Heart right ventricle (tissue), 16 donors: ENCODE measurements at regions of chr2 and their contacts with region 1.

Region 1: DNA sequence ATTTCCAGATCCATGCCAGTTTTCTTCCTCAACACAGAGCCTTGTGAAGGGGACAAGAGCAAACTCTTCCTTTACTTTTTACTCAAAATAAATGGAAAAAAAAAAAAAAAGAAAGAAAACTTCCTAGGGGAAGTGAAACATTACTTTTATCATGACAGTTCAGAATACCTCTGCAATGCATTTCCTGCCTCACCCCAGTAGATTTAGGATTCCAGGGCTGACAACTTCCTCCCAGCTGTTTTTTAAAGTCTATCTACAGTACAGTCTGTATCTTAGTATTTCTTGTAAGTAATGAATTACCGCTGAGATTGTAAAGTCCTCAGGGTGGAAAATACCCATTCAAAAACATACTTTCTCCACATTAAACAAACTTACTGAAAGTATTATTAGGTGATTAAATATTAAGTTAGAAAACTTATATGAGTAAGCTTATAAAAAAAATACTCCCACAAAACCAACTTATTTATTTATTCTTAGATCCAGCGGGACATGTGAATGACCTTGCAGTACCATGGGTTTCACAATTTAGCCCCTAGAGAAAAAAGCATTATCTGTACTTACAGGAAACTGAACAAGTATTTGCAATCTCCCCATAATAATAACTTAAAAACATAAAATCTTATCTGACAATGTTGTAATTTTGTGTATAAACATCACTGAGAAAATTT is 117.7 kb downstream of the RBMS1 start:
- DNase-seq: no peak
- ATAC-seq: peak in 7 of 8 donors; percentile 43 to 80 (median 57)
- H3K4me3 ChIP-seq: peak overlapping the region in 3 of 10 donors; percentile 5 to 16 (median 15)
- H3K27ac ChIP-seq: peak overlapping the region; percentile 55 to 88 (median 78)
- H3K4me1 ChIP-seq: peaks cover 35 to 100% (median 100%) of the 10 kb centered on the region in 9 donors
- H3K27me3 ChIP-seq: no peaks in the 10 kb centered on the region
- CTCF ChIP-seq: no peak

Region 2: DNA sequence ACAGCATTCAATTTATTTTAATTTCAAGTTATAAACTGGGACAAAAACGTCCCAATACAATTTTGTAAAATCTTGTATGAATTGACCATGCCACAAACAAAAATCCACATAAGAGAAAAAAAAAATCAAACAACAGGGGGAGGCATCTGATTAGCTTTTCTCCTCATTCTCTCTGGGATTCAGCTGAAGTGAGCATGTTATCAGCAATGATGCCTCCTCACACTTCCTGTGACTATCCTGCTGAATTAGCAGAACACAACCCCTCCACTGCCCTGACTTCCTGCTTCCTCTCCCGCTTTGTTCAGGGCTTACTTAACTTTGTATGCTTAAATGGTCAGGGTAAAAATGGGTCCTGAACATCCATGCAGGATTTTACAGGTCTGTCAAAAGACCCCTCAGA is 43.6 kb before region 1 on chr2:
- intact Hi-C with region 1: loop called in 3 of 10 experiments (anchors 5 kb)
- DNase-seq: peak in 1 of 2 donors; percentile 37
- ATAC-seq: peak in 7 of 8 donors; percentile 39 to 81 (median 45)
- H3K4me3 ChIP-seq: no peak overlapping the region
- H3K27ac ChIP-seq: peak overlapping the region in 3 of 10 donors; percentile 56 to 82 (median 67)
- H3K4me1 ChIP-seq: peaks cover 5 to 100% (median 95%) of the 10 kb centered on the region in 9 donors
- H3K27me3 ChIP-seq: no peaks in the 10 kb centered on the region
- CTCF ChIP-seq: peak in 5 of 9 donors; percentile 10 to 41 (median 25)

Region 3: GRCh38 chr2:160338901-160339685 is 36.8 kb before region 1 on chr2:
- intact Hi-C with region 1: loop called in 3 of 10 experiments (anchors 5 kb)
- DNase-seq: peak; percentile 20 to 36
- ATAC-seq: peak; percentile 58 to 79 (median 74)
- H3K4me3 ChIP-seq: no peak overlapping the region
- H3K27ac ChIP-seq: peak overlapping the region in 5 of 10 donors; percentile 2 to 39 (median 25)
- H3K4me1 ChIP-seq: peaks cover 9 to 99% (median 81%) of the 10 kb centered on the region in 9 donors
- H3K27me3 ChIP-seq: no peaks in the 10 kb centered on the region
- CTCF ChIP-seq: no peak

Region 4: DNA sequence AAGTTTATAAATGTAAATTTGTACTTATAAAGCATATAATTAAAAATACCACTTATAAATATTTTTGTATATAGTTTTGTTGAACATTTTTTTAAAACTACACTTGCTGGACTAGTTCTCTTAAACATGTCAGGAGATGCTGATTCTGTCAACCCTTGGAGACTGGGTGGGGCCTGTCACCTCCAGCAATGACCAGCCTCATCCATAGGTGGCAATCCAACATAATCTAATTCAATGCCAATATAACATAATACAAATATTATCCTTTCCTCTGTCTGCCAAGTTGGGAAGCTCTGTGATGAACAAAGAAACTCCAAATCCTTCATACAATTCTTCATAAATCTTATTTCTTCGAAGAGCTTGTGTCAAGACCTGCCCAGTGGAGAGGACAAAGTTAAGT is 22.8 kb before region 1 on chr2:
- intact Hi-C with region 1: loop called in 1 of 10 experiments (anchors 2 kb)
- DNase-seq: no peak
- ATAC-seq: no peak
- H3K4me3 ChIP-seq: no peak overlapping the region
- H3K27ac ChIP-seq: peak overlapping the region in 3 of 10 donors; percentile 8 to 45 (median 40)
- H3K4me1 ChIP-seq: peaks cover 2 to 86% (median 79%) of the 10 kb centered on the region in 9 donors
- H3K27me3 ChIP-seq: no peaks in the 10 kb centered on the region
- CTCF ChIP-seq: peak in 4 of 9 donors; percentile 22 to 45 (median 33)

Region 5: DNA sequence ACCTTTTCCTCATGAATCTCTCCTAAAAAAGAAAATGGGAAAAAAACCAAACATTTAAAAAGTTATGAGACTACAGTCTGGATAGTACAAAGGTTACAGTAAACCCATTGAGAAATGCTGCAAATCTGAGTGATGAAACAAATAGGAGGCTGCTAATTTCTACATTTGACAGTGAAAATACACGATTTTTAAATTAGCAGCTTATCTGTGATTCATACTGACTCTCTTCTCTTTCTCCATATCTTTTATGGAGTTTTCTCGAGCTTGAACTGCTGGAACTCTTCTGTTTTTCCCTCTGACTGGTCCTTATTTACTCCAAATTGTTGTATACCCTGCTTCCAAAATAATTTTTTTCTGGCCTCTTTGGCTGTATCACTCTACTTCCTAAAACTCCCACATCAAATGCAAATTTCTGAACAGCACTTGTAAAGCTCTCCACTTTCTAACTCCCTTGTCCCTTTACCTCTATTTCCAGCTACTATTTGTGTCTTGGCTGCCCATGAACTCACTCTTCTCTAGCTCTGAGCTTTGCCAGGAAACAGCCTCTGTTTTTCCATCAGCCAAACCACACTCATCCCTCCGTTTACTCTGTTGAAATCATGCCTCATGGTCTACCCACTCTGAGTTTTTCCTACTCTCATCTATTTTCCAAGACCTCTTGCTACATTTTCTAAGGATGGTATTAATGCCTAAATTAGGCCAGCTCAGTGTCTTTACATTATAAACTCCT is 44.0 kb after region 1 on chr2:
- intact Hi-C with region 1: loop called in 1 of 10 experiments (anchors 5 kb)
- DNase-seq: peak in 1 of 2 donors; percentile 27
- ATAC-seq: peak in 7 of 8 donors; percentile 55 to 94 (median 75)
- H3K4me3 ChIP-seq: no peak overlapping the region
- H3K27ac ChIP-seq: peak overlapping the region in 8 of 10 donors; percentile 28 to 71 (median 52)
- H3K4me1 ChIP-seq: peaks cover 2 to 80% (median 49%) of the 10 kb centered on the region in 9 donors
- H3K27me3 ChIP-seq: no peaks in the 10 kb centered on the region
- CTCF ChIP-seq: no peak